ENCODE measurements at regions of chr4 and their contacts with region 1.

Region 1: GRCh38 chr4:101527188-101527587 is 179.9 kb upstream of the PPP3CA start:
- DNase-seq: peak; percentile 89
- ATAC-seq: peak; percentile 98
- H3K4me3 Mint-ChIP-seq: no peak overlapping the region
- H3K27ac Mint-ChIP-seq: peak overlapping the region; percentile 21
- H3K4me1 Mint-ChIP-seq: peaks cover 26% of the 10 kb centered on the region
- H3K27me3 Mint-ChIP-seq: peaks cover 38% of the 10 kb centered on the region
- CTCF ChIP-seq: no peak

Region 2: GRCh38 chr4:101400096-101400495 is 127.1 kb before region 1 on chr4:
- CTCF ChIA-PET with region 1: no interaction called
- POLR2A ChIA-PET with region 1: no interaction called
- intact Hi-C with region 1: loop called (anchors 5 kb)
- DNase-seq: peak; percentile 70
- ATAC-seq: peak; percentile 99
- H3K4me3 Mint-ChIP-seq: no peak overlapping the region
- H3K27ac Mint-ChIP-seq: no peak overlapping the region
- H3K4me1 Mint-ChIP-seq: peaks cover 16% of the 10 kb centered on the region
- H3K27me3 Mint-ChIP-seq: peaks cover 4% of the 10 kb centered on the region
- CTCF ChIP-seq: no peak

Region 3: DNA sequence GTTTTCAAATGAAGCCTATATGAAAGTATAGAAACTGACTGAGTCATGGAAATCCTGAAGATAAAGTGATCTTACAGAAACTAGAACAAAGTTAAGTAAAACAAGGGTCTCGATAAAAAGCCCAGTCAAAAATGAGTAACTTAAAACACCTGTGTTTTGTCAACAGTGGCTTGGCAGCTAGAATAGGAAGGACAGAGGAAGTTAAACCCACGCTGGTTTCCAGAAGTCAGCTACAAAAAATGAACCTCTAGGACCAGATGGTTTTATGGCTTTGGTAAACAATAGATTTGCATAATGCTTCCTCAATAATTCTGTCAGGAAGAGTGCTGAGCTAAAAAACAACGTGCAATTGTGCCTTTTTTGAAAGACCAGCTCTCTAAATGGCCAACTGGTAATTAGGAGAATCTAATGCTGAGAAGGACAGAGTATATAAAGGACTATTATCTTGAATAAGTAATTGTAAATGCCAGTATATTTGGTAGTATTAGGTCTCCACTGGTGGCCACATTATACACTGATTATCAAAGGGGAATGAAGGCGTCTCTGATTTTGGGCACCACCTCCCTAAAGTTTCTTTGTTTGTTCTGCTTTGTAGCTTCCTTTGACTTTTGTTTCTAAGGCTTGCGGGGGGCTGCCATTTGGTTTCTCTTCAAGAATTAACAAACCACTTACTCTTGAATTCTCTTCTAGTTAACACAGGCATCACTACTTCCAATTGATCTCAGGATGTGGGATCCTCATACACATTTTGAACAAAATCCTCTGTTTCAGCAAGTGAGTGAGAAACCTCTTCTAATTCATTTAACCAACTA is 107.7 kb before region 1 on chr4:
- CTCF ChIA-PET with region 1: interaction called, 3 read pairs
- POLR2A ChIA-PET with region 1: no interaction called
- intact Hi-C with region 1: loop called (anchors 1 kb)
- DNase-seq: peak; percentile 40
- ATAC-seq: peak; percentile 35
- H3K4me3 Mint-ChIP-seq: no peak overlapping the region
- H3K27ac Mint-ChIP-seq: peak overlapping the region; percentile 46
- H3K4me1 Mint-ChIP-seq: peaks cover 42% of the 10 kb centered on the region
- H3K27me3 Mint-ChIP-seq: peaks cover 24% of the 10 kb centered on the region
- CTCF ChIP-seq: no peak

Region 4: DNA sequence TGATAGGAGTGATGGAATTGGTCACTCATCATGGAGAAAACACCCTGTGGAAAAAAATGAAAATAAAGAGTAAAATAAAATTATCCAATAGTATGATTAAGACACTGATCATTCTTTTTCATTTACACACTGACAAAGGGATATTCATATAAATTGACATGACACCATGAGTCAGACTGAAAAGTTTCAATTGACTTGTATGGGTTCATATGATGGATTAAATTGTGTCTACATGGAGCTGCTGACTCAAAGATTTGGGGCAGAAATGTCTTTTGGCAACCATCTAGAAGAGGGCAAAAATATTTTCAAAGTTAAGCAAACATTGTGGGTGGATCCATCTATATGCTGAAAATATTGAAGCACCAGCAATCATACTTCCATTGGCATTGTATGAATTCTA is 26.4 kb before region 1 on chr4:
- CTCF ChIA-PET with region 1: no interaction called
- POLR2A ChIA-PET with region 1: no interaction called
- intact Hi-C with region 1: no loop called
- DNase-seq: no peak
- ATAC-seq: no peak
- H3K4me3 Mint-ChIP-seq: no peak overlapping the region
- H3K27ac Mint-ChIP-seq: no peak overlapping the region
- H3K4me1 Mint-ChIP-seq: peaks cover 3% of the 10 kb centered on the region
- H3K27me3 Mint-ChIP-seq: peaks cover 2% of the 10 kb centered on the region
- CTCF ChIP-seq: no peak

Region 5: GRCh38 chr4:101604976-101605375 is 77.8 kb after region 1 on chr4:
- CTCF ChIA-PET with region 1: no interaction called
- POLR2A ChIA-PET with region 1: no interaction called
- intact Hi-C with region 1: no loop called
- DNase-seq: no peak
- ATAC-seq: no peak
- H3K4me3 Mint-ChIP-seq: no peak overlapping the region
- H3K27ac Mint-ChIP-seq: no peak overlapping the region
- H3K4me1 Mint-ChIP-seq: no peaks in the 10 kb centered on the region
- H3K27me3 Mint-ChIP-seq: no peaks in the 10 kb centered on the region
- CTCF ChIP-seq: no peak